ENCODE measurements at regions of chr16 and their contacts with region 1.

Region 1: DNA sequence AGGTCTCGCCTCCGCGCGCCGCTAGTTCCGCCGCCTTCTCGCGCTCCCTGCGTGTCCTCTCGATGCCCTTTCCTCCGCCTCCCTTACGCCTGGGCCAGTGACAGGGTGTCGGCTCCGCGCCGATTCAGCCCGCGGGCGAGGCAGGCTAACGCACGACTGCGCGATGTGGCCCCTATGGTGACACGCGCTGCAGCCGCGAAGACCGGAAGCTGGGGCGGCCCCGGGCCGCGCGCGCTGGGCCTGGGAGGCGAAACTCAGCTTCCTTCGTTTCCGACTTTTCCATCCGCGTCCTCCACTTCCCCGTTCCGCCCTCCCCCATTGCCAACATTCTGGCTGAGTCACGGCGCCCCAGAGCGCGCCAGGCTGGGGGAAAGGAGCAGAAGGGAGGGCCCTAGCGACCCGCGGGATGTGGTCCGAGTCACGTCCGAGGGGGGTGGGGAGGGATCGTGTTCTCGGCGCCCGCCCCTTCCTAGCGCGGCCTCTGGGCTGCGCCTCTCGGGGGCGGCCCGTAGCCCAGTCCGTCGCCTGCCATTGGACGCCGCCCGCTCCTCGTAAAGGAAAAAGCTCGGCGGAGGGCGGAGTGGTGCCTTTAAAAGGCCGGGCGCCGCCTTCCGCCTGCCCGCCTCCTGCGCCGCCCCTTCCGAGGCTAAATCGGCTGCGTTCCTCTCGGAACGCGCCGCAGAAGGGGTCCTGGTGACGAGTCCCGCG is at the start of gene ALDOA:
- DNase-seq: peak; percentile 97 to 98
- ATAC-seq: peak; percentile 56 to 67
- H3K4me3 ChIP-seq: peak within 1 kb of the TSS; percentile 75 to 91 (median 85)
- H3K27ac ChIP-seq: peak within 1 kb of the TSS; percentile 97 to 100 (median 100)
- H3K4me1 ChIP-seq: peaks cover 70 to 76% of the 10 kb centered on the region in 2 donors
- H3K27me3 ChIP-seq: no peaks in the 10 kb centered on the region
- CTCF ChIP-seq: peak in 1 of 5 experiments; percentile 8
- POLR2A ChIP-seq: peak; percentile 99
- total RNA-seq, gene ALDOA: 6,096 to 10,805 (median 7,093) TPM

Region 2: DNA sequence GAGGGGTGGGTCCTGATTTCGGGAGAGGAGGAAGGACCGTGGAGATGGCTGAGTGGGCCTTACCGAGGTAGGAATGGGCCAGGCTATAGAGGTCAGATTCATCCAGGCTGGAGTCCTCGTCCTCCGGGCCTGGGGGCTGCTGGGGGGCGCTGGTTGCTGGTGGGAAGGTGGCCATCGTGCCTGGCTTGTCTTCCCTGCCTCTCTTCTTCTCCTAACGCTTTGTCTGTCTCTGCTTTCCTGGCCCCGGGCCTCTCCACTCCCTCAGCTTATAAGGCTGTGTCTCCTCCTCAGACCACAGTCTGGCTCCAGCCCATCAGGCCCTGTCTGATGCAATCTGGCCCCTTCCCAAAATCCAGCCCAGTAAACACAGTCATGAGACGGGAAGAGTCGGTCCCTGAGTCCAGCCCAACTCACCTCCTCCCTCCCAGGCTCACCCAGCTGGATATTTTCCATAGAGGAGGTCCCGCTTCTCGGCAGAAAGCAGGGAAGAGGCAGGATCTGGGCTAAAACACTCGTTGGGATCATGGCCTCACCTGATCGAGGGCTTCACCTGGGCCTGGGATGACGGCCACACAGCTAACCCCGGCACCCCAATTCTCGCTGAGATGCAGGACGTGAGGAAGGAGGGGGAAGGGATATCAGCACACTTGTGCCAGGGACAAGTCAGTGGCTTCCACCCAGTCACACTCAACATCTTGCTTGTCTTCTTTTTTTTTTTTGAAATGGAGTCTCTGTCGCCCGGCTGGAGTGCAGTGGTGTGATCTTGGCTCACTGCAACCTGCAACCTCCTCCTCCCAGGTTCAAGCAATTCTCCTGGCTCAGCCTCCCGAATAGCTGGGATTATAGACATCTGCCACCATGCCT is 1526.3 kb before region 1 on chr16 and contains the start of gene NUPR1:
- in situ Hi-C with region 1: no loop called
- intact Hi-C with region 1: loop called (anchors 2 kb)
- DNase-seq: peak; percentile 98 to 99
- ATAC-seq: peak; percentile 84 to 85
- H3K4me3 ChIP-seq: peak within 1 kb of the TSS; percentile 66 to 79 (median 68)
- H3K27ac ChIP-seq: peak within 1 kb of the TSS; percentile 98 to 99 (median 99)
- H3K4me1 ChIP-seq: peaks cover 22 to 35% of the 10 kb centered on the region in 2 donors
- H3K27me3 ChIP-seq: no peaks in the 10 kb centered on the region
- CTCF ChIP-seq: no peak
- POLR2A ChIP-seq: peak; percentile 91 to 96
- total RNA-seq, gene NUPR1: 18.7 to 44.3 (median 22.6) TPM

Region 3: GRCh38 chr16:29995911-29996772 is 69.2 kb before region 1 on chr16 and contains the start of gene INO80E:
- in situ Hi-C with region 1: no loop called
- intact Hi-C with region 1: loop called (anchors 5 kb)
- DNase-seq: peak; percentile 98
- ATAC-seq: peak; percentile 91 to 97
- H3K4me3 ChIP-seq: peak within 1 kb of the TSS; percentile 79 to 100 (median 90)
- H3K27ac ChIP-seq: peak within 1 kb of the TSS; percentile 95 to 100 (median 99)
- H3K4me1 ChIP-seq: peaks cover 17 to 21% of the 10 kb centered on the region in 2 donors
- H3K27me3 ChIP-seq: no peaks in the 10 kb centered on the region
- CTCF ChIP-seq: peak in 1 of 5 experiments; percentile 10
- POLR2A ChIP-seq: peak; percentile 64 to 71
- total RNA-seq, gene INO80E: 45.4 to 74.8 (median 55.5) TPM

Region 4: DNA sequence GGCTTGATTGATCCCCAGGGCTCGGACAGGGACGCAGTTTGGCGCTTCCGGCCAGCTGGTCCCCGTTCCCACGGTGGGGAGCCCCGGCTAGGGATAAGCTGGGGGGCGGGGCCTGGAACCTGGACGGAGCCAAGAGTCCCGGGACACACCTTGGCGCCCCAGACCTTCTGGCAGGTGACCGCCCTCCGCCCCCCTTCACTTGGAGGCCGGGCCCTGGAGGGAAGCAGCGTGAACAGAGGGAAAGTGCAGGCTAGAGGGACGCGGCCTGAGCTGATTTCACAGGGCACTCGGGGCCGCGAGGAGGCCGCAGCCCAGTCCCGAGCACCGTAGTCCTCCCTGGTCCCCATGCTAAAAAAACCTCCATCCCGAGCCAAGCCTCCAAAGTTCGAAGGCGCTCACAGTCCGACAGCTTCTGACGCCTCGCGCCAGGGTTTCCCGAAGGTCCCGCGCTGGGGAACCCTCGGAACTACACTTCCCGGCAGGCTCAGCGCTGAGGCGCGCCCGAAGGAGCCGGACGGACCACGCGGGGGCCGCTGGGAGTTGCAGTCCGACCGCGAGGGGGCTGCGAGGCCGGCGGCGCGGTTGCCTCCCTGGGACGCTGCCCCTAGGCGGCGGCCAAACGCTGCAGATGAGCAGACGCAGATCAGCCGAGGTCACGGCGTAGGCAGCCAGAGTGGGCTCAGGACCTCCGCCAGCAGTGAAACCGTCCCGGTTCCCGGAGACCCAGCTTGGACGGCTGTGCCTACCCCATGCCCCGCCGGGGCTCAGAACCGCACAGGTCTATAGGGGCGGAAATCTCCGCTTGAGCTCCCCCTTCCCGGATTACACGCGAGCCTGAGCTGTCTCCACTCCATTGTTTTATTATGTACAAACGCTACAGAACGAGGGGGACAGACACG is 26.4 kb after region 1 on chr16 and contains the start of gene TBX6:
- in situ Hi-C with region 1: no loop called
- intact Hi-C with region 1: loop called (anchors 1 kb)
- DNase-seq: peak; percentile 88 to 90
- ATAC-seq: peak; percentile 76 to 78
- H3K4me3 ChIP-seq: peak within 1 kb of the TSS; percentile 45 to 83 (median 69)
- H3K27ac ChIP-seq: peak within 1 kb of the TSS; percentile 89 to 99 (median 96)
- H3K4me1 ChIP-seq: peaks cover 39 to 44% of the 10 kb centered on the region in 2 donors
- H3K27me3 ChIP-seq: no peaks in the 10 kb centered on the region
- CTCF ChIP-seq: peak; percentile 80 to 89 (median 87)
- POLR2A ChIP-seq: peak; percentile 4 to 20
- total RNA-seq, gene TBX6: 0.29 to 0.92 (median 0.67) TPM

Region 5: DNA sequence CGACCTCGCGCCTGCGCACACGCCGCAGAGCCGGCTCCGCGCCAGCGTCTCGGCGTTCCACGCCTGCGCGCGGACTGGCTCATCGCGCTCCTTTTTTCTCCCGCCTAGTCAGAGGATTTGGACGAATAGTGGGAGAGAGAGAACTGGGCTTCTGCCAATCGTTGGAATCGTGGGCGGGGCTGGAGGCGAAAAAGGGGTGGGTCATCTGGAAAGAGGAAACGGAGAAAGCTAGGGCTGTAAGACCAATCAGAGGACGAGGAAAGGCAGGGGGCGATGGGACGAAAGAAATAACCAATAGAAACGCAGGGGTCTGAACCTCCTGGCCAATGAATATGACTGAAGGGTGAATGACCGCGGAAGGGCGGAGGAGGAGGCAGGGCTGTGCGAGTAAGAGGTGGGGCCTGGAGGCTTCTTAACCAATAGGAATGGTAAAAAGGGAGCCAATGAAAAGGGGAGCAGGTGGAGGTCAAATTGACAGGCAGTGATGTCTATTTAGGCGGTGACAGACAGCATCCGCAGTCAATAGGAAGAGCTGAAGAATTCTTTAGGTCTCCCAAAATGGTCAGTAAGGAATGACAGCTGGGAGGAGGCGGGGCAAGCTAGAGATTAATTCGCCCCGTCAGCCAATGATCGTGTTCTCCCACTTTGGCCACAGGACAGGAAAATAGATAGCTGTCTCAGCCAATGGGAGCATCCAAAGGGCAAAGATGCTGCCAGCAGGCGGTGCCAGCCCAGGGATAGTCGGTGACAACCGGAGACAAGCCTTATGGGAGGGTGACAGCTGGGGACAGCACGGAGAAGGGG is 305.3 kb after region 1 on chr16 and contains the start of gene TBC1D10B:
- in situ Hi-C with region 1: loop called in 1 of 4 experiments (anchors 25 kb)
- intact Hi-C with region 1: no loop called
- DNase-seq: peak; percentile 99 to 100
- ATAC-seq: peak; percentile 83 to 87
- H3K4me3 ChIP-seq: peak within 1 kb of the TSS; percentile 65 to 78 (median 74)
- H3K27ac ChIP-seq: peak within 1 kb of the TSS; percentile 90 to 99 (median 96)
- H3K4me1 ChIP-seq: peaks cover 41 to 64% of the 10 kb centered on the region in 2 donors
- H3K27me3 ChIP-seq: no peaks in the 10 kb centered on the region
- CTCF ChIP-seq: peak in 1 of 5 experiments; percentile 14
- POLR2A ChIP-seq: no peak
- total RNA-seq, gene TBC1D10B: 35.3 to 52.6 (median 43.6) TPM

Region 6: DNA sequence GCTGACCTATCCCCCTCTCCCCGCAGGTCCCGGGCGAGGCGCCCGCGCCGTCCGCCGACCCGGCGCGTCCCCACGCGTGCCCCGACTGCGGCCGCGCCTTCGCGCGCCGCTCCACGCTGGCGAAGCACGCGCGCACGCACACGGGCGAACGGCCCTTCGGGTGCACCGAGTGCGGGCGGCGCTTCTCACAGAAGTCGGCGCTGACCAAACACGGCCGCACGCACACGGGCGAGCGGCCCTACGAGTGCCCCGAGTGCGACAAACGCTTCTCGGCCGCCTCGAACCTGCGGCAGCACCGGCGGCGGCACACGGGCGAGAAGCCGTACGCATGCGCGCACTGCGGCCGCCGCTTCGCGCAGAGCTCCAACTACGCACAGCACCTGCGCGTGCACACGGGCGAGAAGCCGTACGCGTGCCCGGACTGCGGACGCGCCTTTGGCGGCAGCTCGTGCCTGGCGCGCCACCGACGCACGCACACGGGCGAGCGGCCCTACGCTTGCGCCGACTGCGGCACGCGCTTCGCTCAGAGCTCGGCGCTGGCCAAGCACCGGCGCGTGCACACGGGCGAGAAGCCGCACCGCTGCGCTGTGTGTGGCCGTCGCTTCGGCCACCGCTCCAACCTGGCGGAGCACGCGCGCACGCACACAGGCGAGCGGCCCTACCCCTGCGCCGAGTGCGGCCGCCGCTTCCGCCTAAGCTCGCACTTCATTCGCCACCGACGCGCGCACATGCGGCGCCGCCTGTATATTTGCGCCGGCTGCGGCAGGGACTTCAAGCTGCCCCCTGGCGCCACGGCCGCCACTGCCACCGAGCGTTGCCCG is 352.4 kb after region 1 on chr16:
- in situ Hi-C with region 1: loop called in 1 of 4 experiments (anchors 25 kb)
- intact Hi-C with region 1: loop called (anchors 10 kb)
- DNase-seq: peak; percentile 67 to 85
- ATAC-seq: peak; percentile 84 to 86
- H3K4me3 ChIP-seq: peak overlapping the region; percentile 60 to 77 (median 66)
- H3K27ac ChIP-seq: peak overlapping the region; percentile 93 to 99 (median 96)
- H3K4me1 ChIP-seq: peaks cover 8 to 14% of the 10 kb centered on the region in 2 donors
- H3K27me3 ChIP-seq: no peaks in the 10 kb centered on the region
- CTCF ChIP-seq: peak; percentile 12 to 42 (median 37)
- POLR2A ChIP-seq: peak; percentile 63 to 73

Measured in gastrocnemius medialis (tissue), 4 donors.